Panc1 (cell line): ENCODE measurements at regions of chr11 and their contacts with region 1.

Region 1: DNA sequence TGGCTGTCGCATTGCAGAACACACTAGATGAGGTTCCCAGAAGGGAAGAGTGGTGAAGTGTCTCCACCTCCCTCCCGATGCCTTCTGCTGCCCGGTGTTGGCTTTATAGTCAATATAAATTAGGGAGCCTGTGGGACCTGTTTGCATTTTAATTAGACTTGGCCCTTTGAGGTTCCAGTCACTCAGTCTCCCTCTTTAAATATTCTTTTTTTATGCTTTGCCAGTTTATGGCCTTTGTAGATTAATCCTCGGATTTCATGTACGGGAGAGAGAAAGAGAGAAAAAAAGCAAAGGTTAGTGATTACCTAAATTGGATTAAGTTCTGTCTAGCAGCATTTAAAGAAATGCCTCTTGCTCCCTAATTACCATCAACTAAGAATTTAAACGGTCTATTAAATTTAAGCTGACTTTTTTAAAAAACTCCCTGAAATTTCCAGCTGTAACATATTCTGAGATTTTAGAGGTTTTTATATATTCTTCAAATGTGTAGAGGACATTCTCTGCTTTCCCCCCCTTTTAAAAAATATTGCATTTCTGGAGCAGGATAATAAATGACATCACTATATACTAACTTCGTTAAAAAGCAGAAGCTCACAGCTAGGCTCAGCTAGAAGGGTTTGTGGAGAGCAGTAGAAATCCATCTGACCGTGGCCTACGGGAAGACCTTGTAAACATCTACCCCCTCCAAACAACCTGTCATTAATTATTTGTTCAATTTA is 84.4 kb downstream of the PRR5L start:
- DNase-seq: no peak
- ATAC-seq: no peak
- H3K4me3 ChIP-seq: no peak overlapping the region
- H3K27ac ChIP-seq: no peak overlapping the region
- H3K4me1 ChIP-seq: peaks cover 6% of the 10 kb centered on the region; the same call in 1 of the 2 replicates
- H3K27me3 ChIP-seq: peaks cover 30% of the 10 kb centered on the region
- CTCF ChIP-seq: no peak

Region 2: GRCh38 chr11:36394056-36394455 is 13.6 kb after region 1 on chr11:
- CTCF ChIA-PET with region 1: interaction called, 10 read pairs
- POLR2A ChIA-PET with region 1: no interaction called
- in situ Hi-C with region 1: no loop called
- intact Hi-C with region 1: no loop called
- DNase-seq: no peak
- ATAC-seq: no peak
- H3K4me3 ChIP-seq: no peak overlapping the region
- H3K27ac ChIP-seq: no peak overlapping the region
- H3K4me1 ChIP-seq: no peaks in the 10 kb centered on the region
- H3K27me3 ChIP-seq: no peaks in the 10 kb centered on the region
- CTCF ChIP-seq: no peak